AG04449 (cell line): ENCODE measurements at regions of chr5 and their contacts with region 1.

Region 1: GRCh38 chr5:171226105-171226754 is 82.8 kb upstream of the TLX3 start:
- DNase-seq: no peak
- H3K4me3 ChIP-seq: no peak overlapping the region
- CTCF ChIP-seq: peak; percentile 5

Region 2: GRCh38 chr5:171242521-171242920 is 16.3 kb after region 1 on chr5:
- CTCF ChIA-PET with region 1: interaction called, 14 read pairs
- POLR2A ChIA-PET with region 1: no interaction called
- DNase-seq: no peak
- H3K4me3 ChIP-seq: no peak overlapping the region
- CTCF ChIP-seq: no peak